ENCODE measurements at regions of chr1 and their contacts with region 1.

Region 1: GRCh38 chr1:233033361-233033760 is 83.0 kb downstream of the NTPCR start:
- DNase-seq: peak; percentile 30
- H3K4me3 ChIP-seq: no peak overlapping the region
- H3K27me3 ChIP-seq: no peaks in the 10 kb centered on the region
- CTCF ChIP-seq: no peak

Region 2: GRCh38 chr1:232174306-232174705 is 859.1 kb before region 1 on chr1:
- CTCF ChIA-PET with region 1: no interaction called
- POLR2A ChIA-PET with region 1: interaction called, 20 read pairs
- DNase-seq: no peak
- H3K4me3 ChIP-seq: no peak overlapping the region
- H3K27me3 ChIP-seq: no peaks in the 10 kb centered on the region; the same call in 1 of the 2 replicates
- CTCF ChIP-seq: no peak

Region 3: DNA sequence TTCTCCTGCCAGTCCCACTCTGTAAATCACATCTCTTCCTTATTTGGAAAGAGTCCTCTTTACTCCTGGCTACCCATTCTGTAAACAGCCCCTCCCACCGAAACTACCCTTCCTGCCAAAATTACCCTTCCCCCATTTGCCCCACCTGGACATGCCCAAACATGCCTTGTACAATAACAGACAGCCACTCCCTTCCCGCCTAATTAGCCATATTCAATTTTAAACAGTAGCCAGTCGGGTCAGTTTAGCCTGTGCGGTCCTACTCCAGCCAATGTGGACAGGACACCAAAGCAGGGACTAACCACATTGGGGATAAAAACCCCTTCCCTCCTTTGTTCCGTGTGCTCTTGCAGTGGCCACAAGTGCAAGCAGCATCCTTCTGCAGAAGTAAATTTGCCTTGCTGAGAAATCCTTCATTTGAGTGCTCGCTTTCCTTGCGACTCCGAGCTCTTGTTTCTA is 284.4 kb before region 1 on chr1:
- CTCF ChIA-PET with region 1: no interaction called
- POLR2A ChIA-PET with region 1: no interaction called
- DNase-seq: no peak
- H3K4me3 ChIP-seq: no peak overlapping the region
- H3K27me3 ChIP-seq: no peaks in the 10 kb centered on the region
- CTCF ChIP-seq: no peak

Region 4: DNA sequence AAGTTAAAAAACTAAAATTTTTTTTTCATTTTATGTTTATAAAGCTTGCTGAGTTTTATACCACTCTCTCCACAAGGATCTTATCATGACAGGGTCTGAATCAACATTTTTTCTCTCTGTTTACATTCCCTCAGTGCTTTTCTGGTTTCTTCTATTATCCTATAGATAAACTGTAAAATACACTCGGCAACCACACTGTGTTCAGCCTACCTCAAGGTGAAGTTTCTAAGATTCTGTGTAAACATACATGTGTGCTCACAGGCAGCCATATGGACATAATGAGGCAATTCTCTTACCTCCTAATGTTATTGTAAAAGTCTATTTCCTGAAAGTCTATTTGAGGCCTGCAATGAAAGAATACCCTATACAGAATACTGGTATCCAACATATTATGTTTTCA is 31.6 kb after region 1 on chr1:
- CTCF ChIA-PET with region 1: no interaction called
- POLR2A ChIA-PET with region 1: no interaction called
- DNase-seq: no peak
- H3K4me3 ChIP-seq: no peak overlapping the region
- H3K27me3 ChIP-seq: no peaks in the 10 kb centered on the region
- CTCF ChIP-seq: no peak